MCF 10A (cell line): ENCODE measurements at regions of chr2 and their contacts with region 1.

Region 1: GRCh38 chr2:50746526-50746925 is 285.4 kb downstream of the NRXN1 start:
- DNase-seq: peak; percentile 53
- H3K4me3 Mint-ChIP-seq: no peak overlapping the region
- H3K27ac Mint-ChIP-seq: no peak overlapping the region
- H3K4me1 Mint-ChIP-seq: no peaks in the 10 kb centered on the region
- H3K27me3 Mint-ChIP-seq: no peaks in the 10 kb centered on the region
- CTCF ChIP-seq: peak; percentile 48

Region 2: GRCh38 chr2:50395510-50396297 is 350.8 kb before region 1 on chr2:
- CTCF ChIA-PET with region 1: no interaction called
- POLR2A ChIA-PET with region 1: no interaction called
- intact Hi-C with region 1: no loop called
- DNase-seq: no peak
- H3K4me3 Mint-ChIP-seq: no peak overlapping the region
- H3K27ac Mint-ChIP-seq: no peak overlapping the region
- H3K4me1 Mint-ChIP-seq: no peaks in the 10 kb centered on the region
- H3K27me3 Mint-ChIP-seq: peaks cover 33% of the 10 kb centered on the region
- CTCF ChIP-seq: no peak

Region 3: GRCh38 chr2:50732796-50733195 is 13.7 kb before region 1 on chr2:
- CTCF ChIA-PET with region 1: interaction called, 10 read pairs
- POLR2A ChIA-PET with region 1: no interaction called
- intact Hi-C with region 1: no loop called
- DNase-seq: no peak
- H3K4me3 Mint-ChIP-seq: no peak overlapping the region
- H3K27ac Mint-ChIP-seq: no peak overlapping the region
- H3K4me1 Mint-ChIP-seq: peaks cover 6% of the 10 kb centered on the region
- H3K27me3 Mint-ChIP-seq: no peaks in the 10 kb centered on the region
- CTCF ChIP-seq: no peak